A549 (cell line): ENCODE measurements at regions of chr5 and their contacts with region 1.

Region 1: GRCh38 chr5:73122875-73123810 is 2.8 kb downstream of the TMEM171 start:
- DNase-seq: no peak
- ATAC-seq: no peak
- H3K4me3 ChIP-seq: no peak overlapping the region
- H3K27ac ChIP-seq: no peak overlapping the region
- H3K4me1 ChIP-seq: peaks cover 17% of the 10 kb centered on the region
- CTCF ChIP-seq: no peak
- EP300 ChIP-seq: no peak
- POLR2A ChIP-seq: no peak
- RAD21 ChIP-seq: no peak

Region 2: DNA sequence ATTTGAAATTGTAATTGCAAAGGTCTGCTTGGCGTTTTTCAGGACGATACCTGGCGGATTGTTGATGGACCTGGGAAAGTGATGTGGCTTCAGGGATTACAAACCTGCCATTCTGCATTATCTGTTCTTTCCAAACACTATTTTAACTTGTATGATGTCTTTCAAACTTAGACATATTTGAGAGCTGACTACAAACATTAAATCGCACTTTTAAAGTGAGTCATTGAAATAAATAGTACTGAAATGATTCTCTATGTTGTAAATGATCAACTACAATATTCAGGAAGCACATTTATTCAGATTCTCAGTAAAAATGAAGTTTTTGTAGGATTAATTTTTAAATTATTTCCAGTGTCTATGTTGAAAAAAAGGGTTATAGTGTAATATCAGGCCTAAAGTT is 35.1 kb before region 1 on chr5:
- CTCF ChIA-PET with region 1: interaction called, 11 read pairs
- POLR2A ChIA-PET with region 1: no interaction called
- DNase-seq: no peak
- ATAC-seq: peak in 1 of 2 experiments; percentile 39; a peak in 1 of 6 replicates
- H3K4me3 ChIP-seq: no peak overlapping the region
- H3K27ac ChIP-seq: peak overlapping the region in 1 of 2 experiments; percentile 13; a peak in 2 of 6 replicates
- H3K4me1 ChIP-seq: peaks cover 22% of the 10 kb centered on the region
- CTCF ChIP-seq: no peak
- EP300 ChIP-seq: no peak
- POLR2A ChIP-seq: no peak
- RAD21 ChIP-seq: no peak

Region 3: DNA sequence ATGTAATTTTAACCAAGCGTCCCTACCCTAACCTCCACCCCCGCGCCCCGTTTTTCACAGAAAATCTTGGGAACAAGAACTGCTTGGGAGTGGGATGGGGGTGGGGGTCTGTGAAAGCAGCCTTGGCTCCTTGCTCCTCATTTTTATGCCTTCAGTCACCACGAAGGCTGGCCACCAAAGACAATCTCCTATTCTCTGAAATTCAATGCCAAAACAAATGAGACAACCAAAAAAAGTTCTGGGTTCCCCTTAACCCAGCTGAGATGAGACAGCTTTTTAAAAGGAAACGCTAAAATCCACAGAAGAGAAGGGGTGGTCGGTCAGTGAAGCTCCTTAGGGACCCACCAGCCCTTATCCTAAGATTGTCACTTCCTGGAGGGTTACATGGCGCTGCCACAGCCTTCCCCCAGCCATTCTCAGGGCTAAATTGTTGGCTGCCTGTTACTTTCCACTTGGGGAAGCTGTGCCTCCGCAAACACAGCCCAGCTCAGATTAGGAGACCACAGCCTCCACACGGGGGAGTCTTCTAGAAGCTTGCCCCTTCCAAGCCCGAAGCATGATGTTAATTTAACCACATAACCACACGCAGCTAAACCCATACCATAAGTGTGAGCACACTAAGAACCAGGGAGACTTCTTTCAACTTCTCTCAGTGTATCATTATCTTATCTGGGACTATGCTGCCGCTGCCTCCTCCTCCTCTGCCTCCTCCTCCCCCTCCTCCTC is 189.2 kb after region 1 on chr5:
- CTCF ChIA-PET with region 1: no interaction called
- POLR2A ChIA-PET with region 1: no interaction called
- DNase-seq: peak in 1 of 2 experiments; percentile 25
- ATAC-seq: peak; percentile 51 to 57; a peak in 4 of 6 replicates
- H3K4me3 ChIP-seq: no peak overlapping the region
- H3K27ac ChIP-seq: peak overlapping the region in 1 of 2 experiments; percentile 64; a peak in 1 of 6 replicates
- H3K4me1 ChIP-seq: peaks cover 12% of the 10 kb centered on the region
- CTCF ChIP-seq: no peak
- EP300 ChIP-seq: no peak
- POLR2A ChIP-seq: no peak
- RAD21 ChIP-seq: peak in 1 of 2 experiments; percentile 23; a peak in 1 of 5 replicates